Transverse colon (tissue), 4 donors: ENCODE measurements at regions of chr18 and their contacts with region 1.

Region 1: GRCh38 chr18:67550872-67551520 is 34.5 kb upstream of the DSEL start:
- DNase-seq: no peak
- H3K4me3 ChIP-seq: no peak overlapping the region
- H3K27ac ChIP-seq: no peak overlapping the region
- H3K4me1 ChIP-seq: no peaks in the 10 kb centered on the region
- H3K27me3 ChIP-seq: no peaks in the 10 kb centered on the region
- CTCF ChIP-seq: no peak
- EP300 ChIP-seq: no peak
- POLR2A ChIP-seq: no peak

Region 2: DNA sequence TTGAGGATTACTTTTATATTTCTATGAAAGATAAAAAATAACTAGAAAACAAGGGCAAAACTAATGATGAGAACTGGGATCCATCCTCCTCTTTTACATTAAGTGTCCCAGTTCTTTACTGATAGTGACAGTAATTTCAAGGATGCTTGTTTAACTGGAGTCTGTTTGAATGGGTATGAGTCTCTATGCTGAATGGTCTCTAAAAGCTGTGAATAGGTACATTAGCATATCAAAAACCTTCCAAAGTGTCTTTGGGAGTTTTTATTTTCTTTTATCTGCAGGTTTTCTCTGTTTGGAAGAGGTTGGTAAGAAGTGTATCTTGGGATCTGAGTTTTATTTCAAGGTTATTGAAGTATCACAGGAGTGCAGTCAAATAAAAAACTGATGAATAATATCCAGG is 64.5 kb before region 1 on chr18:
- in situ Hi-C with region 1: no loop called
- intact Hi-C with region 1: no loop called
- DNase-seq: no peak
- H3K4me3 ChIP-seq: no peak overlapping the region
- H3K27ac ChIP-seq: no peak overlapping the region
- H3K4me1 ChIP-seq: no peaks in the 10 kb centered on the region
- H3K27me3 ChIP-seq: no peaks in the 10 kb centered on the region
- CTCF ChIP-seq: no peak
- EP300 ChIP-seq: no peak
- POLR2A ChIP-seq: no peak

Region 3: DNA sequence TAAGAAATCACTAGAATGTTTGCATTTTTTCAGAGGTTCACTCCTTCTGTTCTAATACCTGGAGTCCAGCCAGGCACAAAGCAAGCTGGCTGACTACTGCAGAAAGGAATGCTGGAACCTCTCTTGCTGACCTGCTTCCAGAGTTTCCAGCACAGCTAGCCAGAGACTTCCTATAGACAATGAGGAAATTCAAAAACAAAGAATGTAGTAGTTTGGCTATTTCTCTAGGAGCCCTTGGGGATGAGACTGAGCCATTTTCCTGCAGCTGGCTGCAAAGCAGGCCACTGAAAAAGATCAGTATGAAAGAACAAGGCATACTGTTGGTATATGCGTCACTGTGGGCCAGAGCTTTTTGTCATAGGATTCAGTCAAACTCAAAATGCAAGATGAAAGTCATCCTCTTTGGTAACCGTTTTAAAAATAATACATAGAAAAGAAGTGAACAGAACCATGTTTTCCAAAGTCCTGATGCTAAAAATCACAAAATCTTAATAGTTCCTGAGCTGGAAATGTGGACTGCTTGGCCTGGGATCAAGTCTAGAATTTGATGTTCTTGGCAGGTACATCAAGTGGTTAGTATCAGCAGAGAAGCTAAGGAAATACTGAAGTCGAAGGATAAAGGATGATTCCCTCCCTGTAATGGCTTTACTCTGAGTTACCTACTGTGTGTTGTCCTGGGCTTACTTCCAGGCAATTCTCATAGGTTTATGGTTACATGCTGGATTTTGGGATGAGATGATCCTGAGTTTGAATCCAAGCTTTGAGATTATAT is 25.5 kb before region 1 on chr18:
- in situ Hi-C with region 1: no loop called
- intact Hi-C with region 1: loop called (anchors 1 kb)
- DNase-seq: peak; percentile 39
- H3K4me3 ChIP-seq: no peak overlapping the region
- H3K27ac ChIP-seq: peak overlapping the region; percentile 29 to 56 (median 46)
- H3K4me1 ChIP-seq: peaks cover 0 to 11% (median 4%) of the 10 kb centered on the region in 4 donors
- H3K27me3 ChIP-seq: no peaks in the 10 kb centered on the region
- CTCF ChIP-seq: no peak
- EP300 ChIP-seq: no peak
- POLR2A ChIP-seq: no peak

Region 4: DNA sequence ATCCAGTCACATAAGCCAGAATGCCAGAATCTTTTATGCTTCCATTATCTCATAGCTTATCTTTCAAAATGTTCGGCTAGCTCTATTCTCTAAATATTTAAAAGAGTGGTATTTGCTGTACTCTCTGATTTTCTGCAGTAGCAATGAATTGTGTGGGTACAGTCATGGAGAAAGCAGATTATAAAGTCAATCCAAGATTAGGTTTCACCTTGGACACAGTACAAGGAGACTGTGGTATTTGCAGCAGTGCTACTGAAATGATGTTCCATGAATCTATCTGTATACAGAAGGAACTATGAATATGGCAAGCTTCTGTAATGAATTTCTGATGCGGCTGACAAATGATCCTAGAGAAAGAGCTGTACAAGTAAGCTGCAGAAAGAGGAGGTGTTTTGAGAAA is 19.1 kb before region 1 on chr18:
- in situ Hi-C with region 1: no loop called
- intact Hi-C with region 1: loop called (anchors 1 kb)
- DNase-seq: no peak
- H3K4me3 ChIP-seq: no peak overlapping the region
- H3K27ac ChIP-seq: no peak overlapping the region
- H3K4me1 ChIP-seq: no peaks in the 10 kb centered on the region
- H3K27me3 ChIP-seq: no peaks in the 10 kb centered on the region
- CTCF ChIP-seq: no peak
- EP300 ChIP-seq: no peak
- POLR2A ChIP-seq: no peak

Region 5: DNA sequence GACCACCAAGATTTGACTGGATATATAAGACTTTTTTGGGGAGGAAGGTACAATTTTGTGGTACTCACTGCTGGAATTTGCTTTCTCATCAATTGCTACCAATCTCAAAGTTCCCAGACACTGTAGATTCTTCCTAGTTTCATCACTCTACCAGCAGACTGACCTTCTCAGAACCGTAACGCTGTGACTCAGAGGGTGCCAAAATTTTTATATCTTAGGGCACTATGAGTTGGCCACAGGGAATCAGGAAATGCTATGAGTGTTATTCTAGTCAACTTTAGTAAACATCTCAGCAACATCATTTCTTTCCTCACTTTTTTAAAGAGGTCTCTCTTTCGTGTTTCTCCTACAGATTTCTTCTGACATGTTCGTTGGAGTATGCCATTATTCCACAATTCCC is 664.9 kb after region 1 on chr18:
- in situ Hi-C with region 1: no loop called
- intact Hi-C with region 1: no loop called
- DNase-seq: no peak
- H3K4me3 ChIP-seq: no peak overlapping the region
- H3K27ac ChIP-seq: no peak overlapping the region
- H3K4me1 ChIP-seq: no peaks in the 10 kb centered on the region
- H3K27me3 ChIP-seq: no peaks in the 10 kb centered on the region
- CTCF ChIP-seq: no peak
- EP300 ChIP-seq: no peak
- POLR2A ChIP-seq: no peak